Heart right ventricle (tissue), 16 donors: ENCODE measurements at regions of chr2 and their contacts with region 1.

Region 1: GRCh38 chr2:28276076-28276618 is 116.5 kb upstream of the FOSL2 start:
- DNase-seq: no peak
- ATAC-seq: peak in 5 of 8 donors; percentile 11 to 44 (median 41)
- H3K4me3 ChIP-seq: no peak overlapping the region
- H3K27ac ChIP-seq: peak overlapping the region in 7 of 10 donors; percentile 6 to 77 (median 54)
- H3K4me1 ChIP-seq: peaks cover 0 to 48% (median 29%) of the 10 kb centered on the region in 9 donors
- H3K27me3 ChIP-seq: no peaks in the 10 kb centered on the region
- CTCF ChIP-seq: no peak

Region 2: GRCh38 chr2:27715318-27716210 is 560.6 kb before region 1 on chr2:
- intact Hi-C with region 1: loop called in 1 of 10 experiments (anchors 10 kb)
- DNase-seq: peak; percentile 75 to 82
- ATAC-seq: peak; percentile 88 to 91 (median 89)
- H3K4me3 ChIP-seq: peak overlapping the region; percentile 21 to 57 (median 50)
- H3K27ac ChIP-seq: peak overlapping the region; percentile 76 to 99 (median 93)
- H3K4me1 ChIP-seq: peaks cover 9 to 50% (median 27%) of the 10 kb centered on the region in 9 donors
- H3K27me3 ChIP-seq: peaks cover 0 to 28% (median 0%) of the 10 kb centered on the region in 7 donors
- CTCF ChIP-seq: no peak